ENCODE measurements at regions of chr4 and their contacts with region 1.

Region 1: GRCh38 chr4:139229534-139230039 is 50.4 kb downstream of the MGARP start:
- DNase-seq: peak; percentile 72
- H3K4me3 Mint-ChIP-seq: no peak overlapping the region
- H3K27ac Mint-ChIP-seq: no peak overlapping the region
- H3K4me1 Mint-ChIP-seq: no peaks in the 10 kb centered on the region
- H3K27me3 Mint-ChIP-seq: no peaks in the 10 kb centered on the region
- CTCF ChIP-seq: peak; percentile 62

Region 2: GRCh38 chr4:138999666-139000065 is 229.9 kb before region 1 on chr4:
- CTCF ChIA-PET with region 1: no interaction called
- POLR2A ChIA-PET with region 1: no interaction called
- intact Hi-C with region 1: no loop called
- DNase-seq: no peak
- H3K4me3 Mint-ChIP-seq: no peak overlapping the region
- H3K27ac Mint-ChIP-seq: no peak overlapping the region
- H3K4me1 Mint-ChIP-seq: no peaks in the 10 kb centered on the region
- H3K27me3 Mint-ChIP-seq: no peaks in the 10 kb centered on the region
- CTCF ChIP-seq: no peak

Region 3: DNA sequence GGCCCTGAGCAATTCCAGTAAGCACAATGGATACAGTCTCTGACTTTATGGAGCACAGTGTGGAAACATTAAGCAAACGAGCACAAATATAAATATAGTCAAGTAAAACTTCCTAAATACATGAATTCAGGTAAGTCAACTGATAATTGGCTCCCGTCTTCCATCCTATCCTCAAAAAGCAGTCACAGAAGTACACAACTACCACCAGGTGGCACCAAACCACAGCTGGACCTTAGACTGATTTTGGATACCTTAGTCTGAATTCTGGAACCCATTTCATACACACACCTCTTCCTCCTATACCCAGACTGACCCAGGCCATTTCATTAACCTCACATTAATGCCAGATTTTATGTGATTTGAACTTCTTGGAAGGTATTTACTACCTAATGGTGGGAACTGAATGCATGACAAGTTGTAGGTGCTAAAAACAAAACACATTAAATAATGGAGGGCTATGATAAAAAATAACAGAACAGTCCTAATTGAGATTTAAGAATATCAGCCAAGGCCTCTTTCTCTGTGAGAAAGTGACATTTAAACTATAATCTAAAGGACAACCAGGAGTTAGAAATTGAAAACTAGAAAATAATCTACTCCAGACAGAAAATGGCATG is 130.1 kb before region 1 on chr4:
- CTCF ChIA-PET with region 1: interaction called, 12 read pairs
- POLR2A ChIA-PET with region 1: no interaction called
- intact Hi-C with region 1: loop called (anchors 1 kb)
- DNase-seq: peak; percentile 92
- H3K4me3 Mint-ChIP-seq: no peak overlapping the region
- H3K27ac Mint-ChIP-seq: no peak overlapping the region
- H3K4me1 Mint-ChIP-seq: peaks cover 6% of the 10 kb centered on the region
- H3K27me3 Mint-ChIP-seq: no peaks in the 10 kb centered on the region
- CTCF ChIP-seq: peak; percentile 80

Region 4: DNA sequence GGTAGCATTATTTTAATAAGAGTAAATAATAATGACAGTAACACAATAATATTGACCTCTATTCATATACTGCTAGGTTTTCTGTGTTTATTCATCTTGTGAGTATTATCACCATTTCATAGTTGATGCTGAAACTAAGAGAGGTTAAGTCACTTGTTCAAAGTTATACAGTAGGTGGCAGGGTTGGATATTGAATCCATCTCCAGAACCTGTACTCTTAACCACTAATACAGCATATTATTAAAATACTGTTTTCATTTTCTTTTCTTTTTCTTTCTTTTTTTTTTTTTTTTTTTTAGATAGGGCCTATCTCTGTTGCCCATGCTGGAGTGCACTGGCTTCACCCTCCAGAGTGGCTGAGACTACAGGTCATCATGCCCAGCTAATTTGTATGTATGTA is 45.5 kb before region 1 on chr4:
- CTCF ChIA-PET with region 1: interaction called, 13 read pairs
- POLR2A ChIA-PET with region 1: no interaction called
- intact Hi-C with region 1: loop called (anchors 1 kb)
- DNase-seq: peak; percentile 54
- H3K4me3 Mint-ChIP-seq: no peak overlapping the region
- H3K27ac Mint-ChIP-seq: no peak overlapping the region
- H3K4me1 Mint-ChIP-seq: no peaks in the 10 kb centered on the region
- H3K27me3 Mint-ChIP-seq: no peaks in the 10 kb centered on the region
- CTCF ChIP-seq: peak; percentile 24

Region 5: GRCh38 chr4:139279760-139280620 is 50.4 kb after region 1 on chr4 and contains the start of gene MGARP:
- CTCF ChIA-PET with region 1: interaction called, 6 read pairs
- POLR2A ChIA-PET with region 1: no interaction called
- intact Hi-C with region 1: loop called (anchors 1 kb)
- DNase-seq: no peak
- H3K4me3 Mint-ChIP-seq: no peak within 1 kb of the TSS
- H3K27ac Mint-ChIP-seq: no peak within 1 kb of the TSS
- H3K4me1 Mint-ChIP-seq: no peaks in the 10 kb centered on the region
- H3K27me3 Mint-ChIP-seq: no peaks in the 10 kb centered on the region
- CTCF ChIP-seq: no peak
- total RNA-seq, gene MGARP: not detected in 2 replicates

Region 6: GRCh38 chr4:139324620-139325019 is 95.0 kb after region 1 on chr4:
- CTCF ChIA-PET with region 1: no interaction called
- POLR2A ChIA-PET with region 1: no interaction called
- intact Hi-C with region 1: no loop called
- DNase-seq: no peak
- H3K4me3 Mint-ChIP-seq: no peak overlapping the region
- H3K27ac Mint-ChIP-seq: no peak overlapping the region
- H3K4me1 Mint-ChIP-seq: peaks cover 4% of the 10 kb centered on the region
- H3K27me3 Mint-ChIP-seq: no peaks in the 10 kb centered on the region
- CTCF ChIP-seq: no peak

Region 7: DNA sequence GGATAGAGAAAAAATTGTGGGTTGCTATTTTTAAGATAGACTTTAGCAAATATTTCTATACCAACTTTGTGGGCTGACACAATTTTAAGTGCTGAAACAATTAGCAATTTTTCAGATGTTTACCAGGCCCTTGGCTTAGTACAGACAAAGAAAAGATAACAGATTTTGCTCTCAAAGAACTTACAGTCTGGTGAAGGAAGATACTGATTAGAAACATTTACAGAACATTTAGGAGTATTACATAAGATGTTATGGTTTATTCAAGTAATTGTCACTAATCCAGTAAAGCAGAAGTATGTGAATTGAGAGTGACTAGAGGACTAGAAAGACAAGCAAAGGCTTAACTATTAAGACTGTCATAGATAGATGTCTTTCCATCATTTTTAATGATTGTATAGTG is 108.0 kb after region 1 on chr4:
- CTCF ChIA-PET with region 1: interaction called, 3 read pairs
- POLR2A ChIA-PET with region 1: no interaction called
- intact Hi-C with region 1: loop called (anchors 5 kb)
- DNase-seq: no peak
- H3K4me3 Mint-ChIP-seq: no peak overlapping the region
- H3K27ac Mint-ChIP-seq: peak overlapping the region; percentile 17
- H3K4me1 Mint-ChIP-seq: peaks cover 6% of the 10 kb centered on the region
- H3K27me3 Mint-ChIP-seq: no peaks in the 10 kb centered on the region
- CTCF ChIP-seq: no peak

Region 8: GRCh38 chr4:139453371-139454110 is 224.0 kb after region 1 on chr4:
- CTCF ChIA-PET with region 1: no interaction called
- POLR2A ChIA-PET with region 1: interaction called, 3 read pairs
- intact Hi-C with region 1: loop called (anchors 2 kb)
- DNase-seq: peak; percentile 98
- H3K4me3 Mint-ChIP-seq: peak overlapping the region; percentile 100
- H3K27ac Mint-ChIP-seq: peak overlapping the region; percentile 97
- H3K4me1 Mint-ChIP-seq: peaks cover 45% of the 10 kb centered on the region
- H3K27me3 Mint-ChIP-seq: no peaks in the 10 kb centered on the region
- CTCF ChIP-seq: no peak